Heart left ventricle (tissue), 16 donors: ENCODE measurements at regions of chr11 and their contacts with region 1.

Region 1: DNA sequence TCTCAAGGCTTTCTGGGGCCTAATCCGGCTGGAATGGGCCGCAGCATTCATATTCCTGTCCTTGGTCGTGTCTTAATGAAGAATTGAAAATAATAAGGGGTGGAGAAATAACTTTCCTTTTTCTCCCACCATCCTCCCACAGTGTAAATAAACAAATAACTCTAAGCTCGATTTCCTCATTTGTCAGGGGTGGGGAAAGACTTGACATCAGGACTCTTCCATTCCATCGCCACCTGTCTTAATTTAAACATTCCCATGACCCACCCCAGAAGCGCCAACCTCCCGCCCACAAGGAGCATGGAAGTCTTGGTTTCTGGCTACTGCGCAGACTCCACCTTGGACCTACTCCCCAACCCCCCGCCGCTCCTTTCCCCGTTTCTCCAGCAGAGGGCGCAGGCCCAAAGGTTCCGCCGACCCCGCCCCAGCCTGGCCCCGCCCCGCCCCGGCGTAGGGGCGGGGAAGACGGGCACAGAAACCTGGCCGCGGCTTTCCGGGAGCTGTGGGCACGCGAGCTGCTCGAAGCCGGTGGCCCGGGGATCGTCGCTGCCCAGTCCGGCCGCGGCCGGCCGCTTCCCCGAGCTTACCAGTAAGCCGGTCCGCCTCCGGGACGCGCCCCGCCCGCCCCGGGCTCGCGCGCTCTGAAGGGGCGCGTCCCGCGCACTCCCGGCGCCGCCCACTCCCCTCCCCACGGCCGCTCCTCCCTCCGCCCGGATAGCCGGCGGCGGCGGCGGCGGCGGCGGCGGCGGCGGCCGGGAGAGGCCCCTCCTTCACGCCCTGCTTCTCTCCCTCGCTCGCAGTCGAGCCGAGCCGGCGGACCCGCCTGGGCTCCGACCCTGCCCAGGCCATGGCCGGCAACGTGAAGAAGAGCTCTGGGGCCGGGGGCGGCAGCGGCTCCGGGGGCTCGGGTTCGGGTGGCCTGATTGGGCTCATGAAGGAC is at the start of gene CBL:
- DNase-seq: peak; percentile 95 to 97 (median 96)
- ATAC-seq: peak; percentile 93 to 98 (median 98)
- H3K4me3 ChIP-seq: peak within 1 kb of the TSS; percentile 84 to 99 (median 95)
- H3K27ac ChIP-seq: peak within 1 kb of the TSS; percentile 82 to 98 (median 95)
- H3K4me1 ChIP-seq: peaks cover 0 to 50% (median 17%) of the 10 kb centered on the region in 12 donors
- H3K27me3 ChIP-seq: no peaks in the 10 kb centered on the region
- CTCF ChIP-seq: peak; percentile 74 to 99 (median 92)
- POLR2A ChIP-seq: peak in 1 of 2 donors; percentile 67
- total RNA-seq, gene CBL: 6.1 to 20.4 (median 9.5) TPM

Region 2: DNA sequence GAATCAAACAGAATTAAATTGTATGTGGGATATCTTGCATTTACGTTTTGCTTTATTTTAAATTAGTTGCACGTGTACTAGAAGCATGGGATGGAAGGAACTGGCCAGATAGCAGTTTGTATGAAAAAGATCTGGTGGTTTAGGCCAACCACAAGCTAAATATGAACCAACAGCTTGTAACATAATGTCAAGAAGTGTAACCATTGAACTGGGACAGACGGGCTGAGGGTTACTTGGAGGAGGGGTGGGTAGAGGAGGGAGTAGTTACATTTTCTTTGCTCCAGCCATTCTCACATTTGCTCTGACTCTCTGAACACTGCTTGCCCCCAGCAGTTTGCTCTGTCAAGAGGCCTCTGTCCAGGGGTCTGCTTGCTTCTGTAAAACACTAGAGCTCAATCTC is 353.9 kb before region 1 on chr11:
- intact Hi-C with region 1: no loop called
- DNase-seq: no peak
- ATAC-seq: no peak
- H3K4me3 ChIP-seq: no peak overlapping the region
- H3K27ac ChIP-seq: no peak overlapping the region
- H3K4me1 ChIP-seq: no peaks in the 10 kb centered on the region
- H3K27me3 ChIP-seq: no peaks in the 10 kb centered on the region
- CTCF ChIP-seq: no peak
- POLR2A ChIP-seq: no peak

Region 3: GRCh38 chr11:119144825-119145486 is 60.9 kb before region 1 on chr11:
- intact Hi-C with region 1: no loop called
- DNase-seq: peak in 4 of 5 donors; percentile 42 to 65 (median 47)
- ATAC-seq: peak; percentile 67 to 91 (median 81)
- H3K4me3 ChIP-seq: no peak overlapping the region
- H3K27ac ChIP-seq: no peak overlapping the region
- H3K4me1 ChIP-seq: peaks cover 0 to 23% (median 7%) of the 10 kb centered on the region in 12 donors
- H3K27me3 ChIP-seq: peaks cover 0 to 39% (median 0%) of the 10 kb centered on the region in 9 donors
- CTCF ChIP-seq: peak; percentile 46 to 72 (median 62)
- POLR2A ChIP-seq: no peak

Region 4: GRCh38 chr11:119262668-119263351 is 57.0 kb after region 1 on chr11:
- intact Hi-C with region 1: loop called in 3 of 10 experiments (anchors 5 kb)
- DNase-seq: no peak
- ATAC-seq: peak; percentile 51 to 82 (median 68)
- H3K4me3 ChIP-seq: peak overlapping the region in 1 of 12 donors; percentile 13
- H3K27ac ChIP-seq: peak overlapping the region in 11 of 12 donors; percentile 34 to 80 (median 59)
- H3K4me1 ChIP-seq: peaks cover 4 to 90% (median 23%) of the 10 kb centered on the region in 12 donors
- H3K27me3 ChIP-seq: no peaks in the 10 kb centered on the region
- CTCF ChIP-seq: peak in 4 of 12 donors; percentile 18 to 41 (median 26)
- POLR2A ChIP-seq: no peak

Region 5: GRCh38 chr11:119323538-119324033 is 117.7 kb after region 1 on chr11:
- intact Hi-C with region 1: loop called in 9 of 10 experiments (anchors 2 to 10 kb)
- DNase-seq: peak in 4 of 5 donors; percentile 62 to 78 (median 64)
- ATAC-seq: peak in 1 of 4 donors; percentile 5
- H3K4me3 ChIP-seq: no peak overlapping the region
- H3K27ac ChIP-seq: peak overlapping the region in 5 of 12 donors; percentile 28 to 99 (median 87)
- H3K4me1 ChIP-seq: peaks cover 0 to 53% (median 36%) of the 10 kb centered on the region in 12 donors
- H3K27me3 ChIP-seq: peaks cover 0 to 11% (median 0%) of the 10 kb centered on the region in 9 donors
- CTCF ChIP-seq: peak; percentile 74 to 88 (median 82)
- POLR2A ChIP-seq: no peak

Region 6: DNA sequence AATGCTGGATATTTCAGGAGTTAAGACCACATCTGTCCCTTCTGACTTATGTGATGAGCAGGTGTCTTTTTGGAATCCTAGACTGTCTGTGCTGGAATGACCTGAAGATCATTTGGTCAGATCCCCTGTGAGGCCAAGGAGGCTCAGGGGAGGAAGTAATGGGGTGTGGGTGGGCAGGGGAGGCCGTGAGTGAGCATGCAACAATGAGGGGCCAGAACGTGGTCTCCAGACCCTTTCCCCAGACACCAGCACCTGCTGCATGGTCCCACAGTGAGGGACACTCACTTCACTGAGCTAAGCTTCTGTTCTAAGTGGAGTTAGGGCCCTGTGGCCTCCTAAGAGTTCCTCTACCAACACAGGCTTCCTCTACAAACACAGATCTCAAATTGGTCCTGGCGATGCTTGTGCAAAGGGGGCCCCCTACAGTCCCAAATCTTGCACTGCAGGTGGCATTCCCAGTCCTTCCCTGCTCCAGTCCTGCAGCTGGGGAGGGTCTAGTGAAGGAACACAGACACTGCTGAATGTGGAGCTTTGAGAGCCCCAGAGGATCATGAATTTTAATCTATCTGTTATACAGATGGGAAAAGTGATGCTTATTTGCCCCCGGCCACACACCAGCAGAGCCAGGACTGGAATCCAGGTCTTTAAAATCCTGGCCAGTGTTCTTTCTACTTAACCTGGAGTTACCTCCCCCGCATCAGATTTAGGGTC is 168.2 kb after region 1 on chr11:
- intact Hi-C with region 1: loop called in 1 of 10 experiments (anchors 2 kb)
- DNase-seq: peak in 4 of 5 donors; percentile 62 to 77 (median 66)
- ATAC-seq: peak in 2 of 4 donors; percentile 4 to 9
- H3K4me3 ChIP-seq: no peak overlapping the region
- H3K27ac ChIP-seq: peak overlapping the region in 10 of 12 donors; percentile 87 to 100 (median 94)
- H3K4me1 ChIP-seq: peaks cover 0 to 90% (median 60%) of the 10 kb centered on the region in 12 donors
- H3K27me3 ChIP-seq: no peaks in the 10 kb centered on the region
- CTCF ChIP-seq: peak; percentile 76 to 91 (median 84)
- POLR2A ChIP-seq: no peak

Region 7: GRCh38 chr11:119474682-119475596 is 269.1 kb after region 1 on chr11:
- intact Hi-C with region 1: loop called in 2 of 10 experiments (anchors 10 kb)
- DNase-seq: peak; percentile 51 to 66 (median 62)
- ATAC-seq: peak; percentile 38 to 81 (median 77)
- H3K4me3 ChIP-seq: no peak overlapping the region
- H3K27ac ChIP-seq: no peak overlapping the region
- H3K4me1 ChIP-seq: peaks cover 0 to 7% (median 0%) of the 10 kb centered on the region in 12 donors
- H3K27me3 ChIP-seq: peaks cover 0 to 6% (median 0%) of the 10 kb centered on the region in 9 donors
- CTCF ChIP-seq: peak; percentile 73 to 92 (median 86)
- POLR2A ChIP-seq: no peak